ENCODE measurements at regions of chr4 and their contacts with region 1.

Region 1: GRCh38 chr4:147019061-147019460 is 73.4 kb upstream of the TTC29 start:
- DNase-seq: peak; percentile 22
- H3K4me3 Mint-ChIP-seq: no peak overlapping the region
- H3K27ac Mint-ChIP-seq: no peak overlapping the region
- H3K4me1 Mint-ChIP-seq: no peaks in the 10 kb centered on the region
- H3K27me3 Mint-ChIP-seq: peaks cover 4% of the 10 kb centered on the region

Region 2: DNA sequence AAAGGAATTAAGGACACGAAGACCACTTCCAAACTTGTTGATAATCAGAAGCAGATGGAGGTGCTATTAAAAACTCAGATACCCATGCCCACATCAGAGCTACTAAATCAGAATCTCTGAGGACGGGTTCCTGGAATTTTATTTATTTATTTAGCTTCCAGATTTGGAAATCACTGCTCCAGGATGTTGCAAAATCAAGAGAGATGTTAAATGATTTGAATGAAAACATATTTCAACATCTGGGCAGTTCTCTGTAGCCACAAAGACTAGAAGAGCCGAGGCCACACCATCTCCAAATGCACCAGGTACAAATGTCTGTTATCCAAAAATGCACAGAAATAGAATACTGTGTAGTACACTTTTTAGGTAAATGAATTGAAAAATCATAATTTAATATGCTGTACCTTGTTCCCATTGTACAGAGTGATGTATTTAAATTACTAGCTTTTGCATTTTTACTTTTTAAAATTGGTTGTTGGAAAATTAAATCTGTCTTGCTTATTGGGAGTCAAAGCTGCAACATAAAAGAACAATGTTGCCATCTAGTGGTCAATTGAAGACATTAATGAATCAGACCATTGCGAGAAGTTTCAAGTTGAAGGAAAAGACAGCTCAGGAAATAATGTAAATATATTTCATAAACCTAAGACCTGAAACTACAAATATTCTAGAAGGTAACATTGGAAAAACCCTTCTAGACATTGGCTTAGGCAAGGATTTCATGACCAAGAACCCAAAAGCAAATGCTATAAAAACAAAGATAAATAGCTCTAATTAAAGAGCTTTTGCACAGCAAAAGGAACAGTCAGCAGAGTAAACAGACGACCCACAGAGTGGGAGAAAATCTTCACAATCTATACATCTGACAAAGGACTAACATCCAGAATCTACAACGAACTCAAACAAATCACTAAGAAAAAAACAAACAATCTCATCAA is 77.9 kb after region 1 on chr4:
- intact Hi-C with region 1: loop called (anchors 1 kb)
- DNase-seq: no peak
- H3K4me3 Mint-ChIP-seq: no peak overlapping the region
- H3K27ac Mint-ChIP-seq: no peak overlapping the region
- H3K4me1 Mint-ChIP-seq: no peaks in the 10 kb centered on the region
- H3K27me3 Mint-ChIP-seq: no peaks in the 10 kb centered on the region